K562 (cell line): ENCODE measurements at regions of chr1 and their contacts with region 1.

Region 1: GRCh38 chr1:26555550-26556510 is 26.3 kb downstream of the RPS6KA1 start:
- DNase-seq: peak; percentile 51 to 74 (median 56)
- ATAC-seq: peak; percentile 47
- H3K4me3 ChIP-seq: no peak overlapping the region
- H3K27ac ChIP-seq: peak overlapping the region; percentile 14; the same call in 2 of the 3 replicates
- H3K4me1 ChIP-seq: peaks cover 0 to 18% of the 10 kb centered on the region in 2 experiments; a peak in 3 of 5 replicates
- H3K27me3 ChIP-seq: no peaks in the 10 kb centered on the region
- CTCF ChIP-seq: no peak
- EP300 ChIP-seq: no peak; the same call in 1 of the 2 replicates
- POLR2A ChIP-seq: no peak
- RAD21 ChIP-seq: no peak

Region 2: GRCh38 chr1:26541816-26542711 is 13.8 kb before region 1 on chr1:
- CTCF ChIA-PET with region 1: no interaction called
- POLR2A ChIA-PET with region 1: interaction called, 11 read pairs
- in situ Hi-C with region 1: no loop called
- intact Hi-C with region 1: no loop called
- DNase-seq: peak; percentile 91 to 95 (median 92)
- ATAC-seq: peak; percentile 98
- H3K4me3 ChIP-seq: no peak overlapping the region
- H3K27ac ChIP-seq: peak overlapping the region; percentile 68; the same call in 2 of the 3 replicates
- H3K4me1 ChIP-seq: peaks cover 29 to 39% of the 10 kb centered on the region in 2 experiments
- H3K27me3 ChIP-seq: no peaks in the 10 kb centered on the region
- CTCF ChIP-seq: peak; percentile 86 to 89 (median 88)
- EP300 ChIP-seq: peak; percentile 32; the same call in 1 of the 2 replicates
- POLR2A ChIP-seq: no peak
- RAD21 ChIP-seq: peak; percentile 52 to 65